B cell (primary cell): ENCODE measurements at regions of chr15 and their contacts with region 1.

Region 1: GRCh38 chr15:94324117-94324826 is 92.9 kb downstream of the MCTP2 start:
- DNase-seq: peak; percentile 82
- ATAC-seq: peak; percentile 91
- H3K4me3 ChIP-seq: no peak overlapping the region
- H3K4me3 Mint-ChIP-seq: no peak overlapping the region
- H3K27ac ChIP-seq: no peak overlapping the region
- H3K27ac Mint-ChIP-seq: peak overlapping the region; percentile 67
- H3K4me1 ChIP-seq: peaks cover 3 to 8% of the 10 kb centered on the region in 2 donors
- H3K4me1 Mint-ChIP-seq: peaks cover 22% of the 10 kb centered on the region
- H3K27me3 ChIP-seq: no peaks in the 10 kb centered on the region
- H3K27me3 Mint-ChIP-seq: no peaks in the 10 kb centered on the region
- CTCF ChIP-seq: peak; percentile 92

Region 2: GRCh38 chr15:93671387-93671943 is 652.8 kb before region 1 on chr15:
- CTCF ChIA-PET with region 1: no interaction called
- POLR2A ChIA-PET with region 1: no interaction called
- intact Hi-C with region 1: no loop called
- DNase-seq: no peak
- ATAC-seq: no peak
- H3K4me3 ChIP-seq: no peak overlapping the region
- H3K4me3 Mint-ChIP-seq: no peak overlapping the region
- H3K27ac ChIP-seq: no peak overlapping the region
- H3K27ac Mint-ChIP-seq: no peak overlapping the region
- H3K4me1 ChIP-seq: no peaks in the 10 kb centered on the region
- H3K4me1 Mint-ChIP-seq: no peaks in the 10 kb centered on the region
- H3K27me3 ChIP-seq: no peaks in the 10 kb centered on the region
- H3K27me3 Mint-ChIP-seq: no peaks in the 10 kb centered on the region
- CTCF ChIP-seq: no peak

Region 3: DNA sequence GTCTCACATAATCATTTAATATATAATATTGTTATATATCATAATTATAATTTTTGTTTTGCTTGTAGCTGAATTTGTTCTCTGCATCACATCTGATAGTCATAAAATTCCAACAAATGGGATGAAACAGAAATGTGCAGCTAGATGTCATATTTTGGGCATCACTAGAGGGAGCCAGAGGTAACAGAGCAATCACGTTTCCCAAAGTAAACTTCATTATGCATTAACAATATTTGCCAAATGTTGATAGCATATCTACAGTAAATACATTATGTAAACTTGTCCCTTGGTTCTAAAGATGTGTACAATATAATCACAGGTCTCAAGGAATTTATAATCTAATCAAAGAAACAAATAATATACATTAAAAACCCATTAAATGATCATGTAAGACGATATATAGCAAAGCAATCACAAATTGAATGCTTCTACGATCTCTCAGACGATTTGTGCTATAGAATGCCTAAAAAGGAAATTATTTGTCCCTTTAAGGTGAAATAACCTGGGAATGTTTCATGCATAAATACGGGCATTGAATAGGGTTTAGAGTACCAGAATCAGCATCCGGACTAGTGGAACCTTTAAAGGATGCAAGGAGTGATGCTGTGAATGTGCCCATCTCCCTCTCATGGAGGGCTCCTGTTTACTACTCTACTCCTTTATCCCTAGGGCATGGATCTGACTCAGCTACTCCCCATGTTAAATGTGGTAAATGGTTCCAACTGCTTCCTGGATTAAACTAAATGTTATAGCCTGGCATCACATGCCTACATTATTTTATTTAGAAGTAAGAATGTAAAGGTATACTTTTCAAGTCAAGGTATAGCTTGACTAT is 327.0 kb before region 1 on chr15:
- CTCF ChIA-PET with region 1: interaction called, 11 read pairs
- POLR2A ChIA-PET with region 1: no interaction called
- intact Hi-C with region 1: loop called (anchors 2 kb)
- DNase-seq: no peak
- ATAC-seq: no peak
- H3K4me3 ChIP-seq: no peak overlapping the region
- H3K4me3 Mint-ChIP-seq: no peak overlapping the region
- H3K27ac ChIP-seq: no peak overlapping the region
- H3K27ac Mint-ChIP-seq: no peak overlapping the region
- H3K4me1 ChIP-seq: no peaks in the 10 kb centered on the region
- H3K4me1 Mint-ChIP-seq: no peaks in the 10 kb centered on the region
- H3K27me3 ChIP-seq: no peaks in the 10 kb centered on the region
- H3K27me3 Mint-ChIP-seq: peaks cover 6% of the 10 kb centered on the region
- CTCF ChIP-seq: peak; percentile 78

Region 4: GRCh38 chr15:94174399-94174802 is 149.9 kb before region 1 on chr15:
- CTCF ChIA-PET with region 1: interaction called, 10 read pairs
- POLR2A ChIA-PET with region 1: no interaction called
- intact Hi-C with region 1: no loop called
- DNase-seq: peak; percentile 66
- ATAC-seq: peak; percentile 91
- H3K4me3 ChIP-seq: no peak overlapping the region
- H3K4me3 Mint-ChIP-seq: peak overlapping the region; percentile 48
- H3K27ac ChIP-seq: no peak overlapping the region
- H3K27ac Mint-ChIP-seq: peak overlapping the region; percentile 3
- H3K4me1 ChIP-seq: peaks cover 19 to 22% of the 10 kb centered on the region in 2 donors
- H3K4me1 Mint-ChIP-seq: peaks cover 22% of the 10 kb centered on the region
- H3K27me3 ChIP-seq: peaks cover 0 to 14% (median 3%) of the 10 kb centered on the region in 4 experiments
- H3K27me3 Mint-ChIP-seq: peaks cover 43% of the 10 kb centered on the region
- CTCF ChIP-seq: no peak

Region 5: GRCh38 chr15:94238539-94239118 is 85.6 kb before region 1 on chr15:
- CTCF ChIA-PET with region 1: interaction called, 97 read pairs
- POLR2A ChIA-PET with region 1: no interaction called
- intact Hi-C with region 1: no loop called
- DNase-seq: peak; percentile 77
- ATAC-seq: peak; percentile 74
- H3K4me3 ChIP-seq: no peak overlapping the region
- H3K4me3 Mint-ChIP-seq: peak overlapping the region; percentile 64
- H3K27ac ChIP-seq: peak overlapping the region; percentile 25 to 48
- H3K27ac Mint-ChIP-seq: peak overlapping the region; percentile 88
- H3K4me1 ChIP-seq: peaks cover 54 to 61% of the 10 kb centered on the region in 2 donors
- H3K4me1 Mint-ChIP-seq: peaks cover 79% of the 10 kb centered on the region
- H3K27me3 ChIP-seq: no peaks in the 10 kb centered on the region
- H3K27me3 Mint-ChIP-seq: no peaks in the 10 kb centered on the region
- CTCF ChIP-seq: no peak

Region 6: DNA sequence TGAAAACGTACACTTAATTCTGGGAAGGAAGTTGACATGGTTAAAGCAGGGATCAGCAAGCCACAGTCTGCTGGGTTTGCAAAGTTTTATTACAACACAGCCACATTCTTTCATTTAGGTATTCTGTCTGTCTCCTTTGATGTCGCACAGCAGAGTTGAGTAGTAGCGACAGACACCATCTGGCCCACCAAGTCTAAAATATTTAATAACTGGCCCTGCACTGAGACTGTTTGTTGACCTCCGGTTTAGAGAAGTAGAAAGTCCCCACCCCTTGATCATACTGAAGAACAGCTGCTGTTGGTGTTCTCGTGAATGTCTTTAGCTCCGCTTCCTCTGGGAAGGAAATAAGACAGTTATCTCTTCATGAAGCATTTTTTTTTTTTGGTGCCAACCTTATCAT is 26.7 kb before region 1 on chr15:
- CTCF ChIA-PET with region 1: interaction called, 18 read pairs
- POLR2A ChIA-PET with region 1: no interaction called
- intact Hi-C with region 1: no loop called
- DNase-seq: peak; percentile 67
- ATAC-seq: peak; percentile 85
- H3K4me3 ChIP-seq: peak overlapping the region in 2 of 5 experiments; percentile 21 to 26
- H3K4me3 Mint-ChIP-seq: peak overlapping the region; percentile 62
- H3K27ac ChIP-seq: peak overlapping the region; percentile 71
- H3K27ac Mint-ChIP-seq: peak overlapping the region; percentile 75
- H3K4me1 ChIP-seq: peaks cover 43 to 45% of the 10 kb centered on the region in 2 donors
- H3K4me1 Mint-ChIP-seq: peaks cover 71% of the 10 kb centered on the region
- H3K27me3 ChIP-seq: no peaks in the 10 kb centered on the region
- H3K27me3 Mint-ChIP-seq: no peaks in the 10 kb centered on the region
- CTCF ChIP-seq: no peak